AG04450 (cell line): ENCODE measurements at regions of chr2 and their contacts with region 1.

Region 1: DNA sequence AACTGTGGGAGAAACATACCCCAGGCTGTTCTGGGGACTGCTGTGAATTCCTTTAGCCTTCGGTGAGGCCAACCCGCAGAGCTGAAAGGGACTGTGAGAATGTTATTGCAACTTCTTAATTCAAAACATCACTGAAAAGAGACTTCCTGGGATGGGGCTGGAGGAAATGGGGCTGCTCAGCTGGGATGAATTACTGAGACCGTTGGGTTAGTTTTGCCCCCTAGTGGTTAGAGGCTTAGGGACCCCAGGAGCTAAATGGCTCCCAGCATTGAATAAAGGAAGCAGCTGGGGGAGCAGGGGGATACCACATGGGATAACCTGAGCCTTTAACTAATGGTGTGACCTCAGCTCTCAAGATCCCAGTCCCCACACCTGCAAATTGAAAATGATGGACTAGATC is 941.1 kb upstream of the FANCL start:
- DNase-seq: no peak
- H3K4me3 ChIP-seq: no peak overlapping the region
- H3K27ac ChIP-seq: no peak overlapping the region
- H3K27me3 ChIP-seq: no peaks in the 10 kb centered on the region
- CTCF ChIP-seq: peak; percentile 54

Region 2: DNA sequence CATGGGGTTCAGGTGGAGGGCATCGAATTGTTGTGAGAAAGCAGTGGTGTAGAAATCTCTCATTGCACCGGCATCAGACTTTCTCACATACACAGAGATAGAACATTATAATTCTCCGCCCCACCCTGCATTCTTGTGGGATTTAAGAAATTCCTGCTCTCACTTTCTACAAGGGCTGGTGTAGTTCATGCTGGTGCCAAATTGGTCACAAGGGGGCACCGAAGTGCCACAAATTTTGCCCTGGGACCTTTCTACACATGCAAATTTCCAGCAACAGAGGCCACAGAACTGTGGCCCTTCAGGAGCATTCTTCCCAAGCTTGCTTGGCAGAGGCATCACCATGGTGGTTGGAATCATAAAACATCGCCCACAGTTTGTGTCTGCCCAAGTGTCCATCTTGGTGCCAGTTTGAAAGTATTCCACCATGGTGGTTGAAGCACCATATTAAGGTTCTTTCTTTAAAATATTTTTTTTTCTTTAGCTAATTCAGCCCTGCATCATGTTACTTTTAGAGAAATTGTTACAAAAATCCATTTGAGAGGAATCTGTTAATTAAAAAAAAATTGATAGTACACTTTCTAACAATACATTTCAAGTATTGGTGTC is 420.0 kb before region 1 on chr2:
- CTCF ChIA-PET with region 1: interaction called, 10 read pairs
- POLR2A ChIA-PET with region 1: no interaction called
- DNase-seq: peak; percentile 4
- H3K4me3 ChIP-seq: no peak overlapping the region
- H3K27ac ChIP-seq: no peak overlapping the region
- H3K27me3 ChIP-seq: no peaks in the 10 kb centered on the region
- CTCF ChIP-seq: peak; percentile 62

Region 3: GRCh38 chr2:59237311-59237710 is 55.1 kb after region 1 on chr2:
- CTCF ChIA-PET with region 1: no interaction called
- POLR2A ChIA-PET with region 1: no interaction called
- DNase-seq: no peak
- H3K4me3 ChIP-seq: no peak overlapping the region
- H3K27ac ChIP-seq: no peak overlapping the region
- H3K27me3 ChIP-seq: no peaks in the 10 kb centered on the region
- CTCF ChIP-seq: no peak